ENCODE measurements at regions of chr12 and their contacts with region 1.

Region 1: GRCh38 chr12:58804749-58805148 is 115.6 kb downstream of the LRIG3 start:
- DNase-seq: peak; percentile 6
- H3K4me3 ChIP-seq: no peak overlapping the region
- H3K27ac ChIP-seq: no peak overlapping the region
- H3K4me1 ChIP-seq: no peaks in the 10 kb centered on the region
- H3K27me3 ChIP-seq: peaks cover 0 to 2% of the 10 kb centered on the region in 2 experiments
- CTCF ChIP-seq: peak; percentile 36 to 41
- POLR2A ChIP-seq: no peak

Region 2: GRCh38 chr12:58773986-58774385 is 30.8 kb before region 1 on chr12:
- CTCF ChIA-PET with region 1: interaction called, 10 read pairs
- POLR2A ChIA-PET with region 1: no interaction called
- dilution Hi-C with region 1: no loop called
- intact Hi-C with region 1: no loop called
- DNase-seq: no peak
- H3K4me3 ChIP-seq: no peak overlapping the region
- H3K27ac ChIP-seq: no peak overlapping the region
- H3K4me1 ChIP-seq: no peaks in the 10 kb centered on the region
- H3K27me3 ChIP-seq: peaks cover 0 to 1% of the 10 kb centered on the region in 2 experiments
- CTCF ChIP-seq: no peak
- POLR2A ChIP-seq: no peak

Region 3: DNA sequence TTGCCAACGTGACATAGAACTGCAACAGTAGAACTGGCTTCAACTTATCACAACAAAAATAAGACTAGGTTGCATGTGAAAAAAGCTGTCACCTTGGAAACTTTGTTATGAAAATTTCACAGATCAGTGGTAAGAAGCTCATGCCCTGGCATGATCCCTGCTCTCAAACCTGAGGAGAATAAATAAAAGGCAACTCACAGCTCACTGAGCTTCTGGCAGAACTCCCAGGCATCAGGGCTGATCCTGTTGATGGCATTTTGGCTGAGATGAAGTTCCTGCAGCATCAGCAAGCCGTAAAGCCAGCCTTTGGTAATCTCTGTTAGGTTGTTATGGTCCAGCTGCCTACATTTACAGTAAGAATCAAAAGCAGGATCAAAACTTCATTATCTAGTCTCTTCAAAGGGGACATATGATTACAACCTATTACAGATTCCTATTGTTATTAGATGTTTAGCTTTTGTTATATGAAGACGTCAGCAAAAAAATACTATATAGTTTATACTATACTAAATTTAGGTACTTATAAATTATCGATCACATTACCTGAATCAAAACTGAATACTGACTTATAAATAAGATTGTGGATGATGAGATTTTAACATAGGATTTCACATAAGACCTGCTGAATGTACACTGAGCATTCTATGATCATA is 83.5 kb after region 1 on chr12:
- CTCF ChIA-PET with region 1: no interaction called
- POLR2A ChIA-PET with region 1: no interaction called
- dilution Hi-C with region 1: no loop called
- intact Hi-C with region 1: no loop called
- DNase-seq: peak; percentile 39
- H3K4me3 ChIP-seq: no peak overlapping the region
- H3K27ac ChIP-seq: no peak overlapping the region
- H3K4me1 ChIP-seq: no peaks in the 10 kb centered on the region
- H3K27me3 ChIP-seq: no peaks in the 10 kb centered on the region
- CTCF ChIP-seq: no peak
- POLR2A ChIP-seq: no peak

Measured in endothelial cell of umbilical vein (primary cell).